GM12878 (cell line): ENCODE measurements at regions of chr3 and their contacts with region 1.

Region 1: GRCh38 chr3:14178247-14179113 is at the starts of genes LSM3 and XPC:
- DNase-seq: peak; percentile 97
- ATAC-seq: peak; percentile 92
- H3K4me3 ChIP-seq: peak within 1 kb of the TSS; percentile 93
- H3K27ac ChIP-seq: peak within 1 kb of the TSS; percentile 84
- H3K4me1 ChIP-seq: peaks cover 14% of the 10 kb centered on the region
- H3K27me3 ChIP-seq: no peaks in the 10 kb centered on the region
- CTCF ChIP-seq: no peak
- EP300 ChIP-seq: no peak
- POLR2A ChIP-seq: peak; percentile 98
- RAD21 ChIP-seq: no peak
- polyA plus RNA-seq, gene LSM3: 98.1 to 111 TPM
- polyA plus RNA-seq, gene XPC: 4.0 to 6.1 TPM

Region 2: GRCh38 chr3:14124615-14125190 is 53.8 kb before region 1 on chr3 and contains the starts of genes CHCHD4 and TMEM43:
- CTCF ChIA-PET with region 1: interaction called, 9 read pairs
- POLR2A ChIA-PET with region 1: interaction called, 42 read pairs
- RAD21 ChIA-PET with region 1: interaction called, 27 read pairs
- SMC1A ChIA-PET with region 1: interaction called, 10 read pairs
- in situ Hi-C with region 1: no loop called
- intact Hi-C with region 1: loop called (anchors 1 kb)
- DNase-seq: peak; percentile 95
- ATAC-seq: peak; percentile 90
- H3K4me3 ChIP-seq: peak within 1 kb of the TSS; percentile 93
- H3K27ac ChIP-seq: peak within 1 kb of the TSS; percentile 81
- H3K4me1 ChIP-seq: peaks cover 8% of the 10 kb centered on the region
- H3K27me3 ChIP-seq: no peaks in the 10 kb centered on the region
- CTCF ChIP-seq: no peak
- EP300 ChIP-seq: no peak
- POLR2A ChIP-seq: peak; percentile 79
- RAD21 ChIP-seq: no peak
- polyA plus RNA-seq, gene CHCHD4: 37.9 to 46.8 TPM
- polyA plus RNA-seq, gene TMEM43: 7.2 to 7.6 TPM

Region 3: DNA sequence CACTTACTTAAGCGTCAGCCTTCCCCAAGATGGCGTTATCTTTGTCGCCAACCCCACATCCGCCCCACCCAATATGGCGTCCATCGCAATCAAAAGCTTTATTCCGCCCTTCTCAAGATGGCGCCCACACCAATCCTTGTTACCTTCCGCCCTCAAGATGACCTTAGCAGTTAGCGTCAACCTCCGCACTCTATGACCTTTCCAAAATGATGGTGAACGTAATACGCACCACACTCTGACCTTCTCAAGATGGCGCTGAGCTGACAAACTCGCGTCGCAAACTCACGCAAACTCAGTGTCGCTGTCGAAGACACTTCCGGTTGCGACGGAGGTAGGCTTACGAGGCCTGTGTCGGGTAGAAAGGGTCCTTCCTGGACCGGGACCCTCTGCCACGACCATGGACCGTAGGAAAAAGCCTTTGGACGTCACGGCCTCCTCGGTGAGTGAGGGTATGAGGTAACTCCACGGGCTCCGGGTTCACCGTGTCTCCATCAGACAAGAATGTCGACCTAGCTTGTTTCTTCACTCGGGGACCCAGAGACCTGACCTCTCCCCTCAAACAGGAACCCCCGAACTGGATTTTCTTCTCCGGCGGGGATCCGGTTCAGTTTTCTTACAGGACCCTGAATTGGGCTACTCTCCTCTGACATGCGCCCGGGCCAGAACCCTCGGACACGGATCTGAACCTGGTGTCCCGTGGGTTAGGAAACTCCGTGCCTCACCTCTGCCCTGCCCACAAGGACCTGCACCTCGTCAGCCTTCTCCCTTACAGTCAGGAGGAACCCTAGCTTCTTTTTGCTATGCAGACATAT is 473.2 kb after region 1 on chr3 and contains the start of gene CCDC174:
- CTCF ChIA-PET with region 1: no interaction called
- POLR2A ChIA-PET with region 1: interaction called, 10 read pairs
- RAD21 ChIA-PET with region 1: no interaction called
- SMC1A ChIA-PET with region 1: interaction called, 3 read pairs
- in situ Hi-C with region 1: no loop called
- intact Hi-C with region 1: no loop called
- DNase-seq: peak; percentile 100
- ATAC-seq: peak; percentile 97
- H3K4me3 ChIP-seq: peak within 1 kb of the TSS; percentile 84
- H3K27ac ChIP-seq: peak within 1 kb of the TSS; percentile 91
- H3K4me1 ChIP-seq: no peaks in the 10 kb centered on the region
- H3K27me3 ChIP-seq: no peaks in the 10 kb centered on the region
- CTCF ChIP-seq: no peak
- EP300 ChIP-seq: no peak; a peak in 1 of 4 replicates
- POLR2A ChIP-seq: peak; percentile 99
- RAD21 ChIP-seq: no peak
- polyA plus RNA-seq, gene CCDC174: 26.1 to 31.3 TPM